ENCODE measurements at regions of chr1 and their contacts with region 1.

Region 1: DNA sequence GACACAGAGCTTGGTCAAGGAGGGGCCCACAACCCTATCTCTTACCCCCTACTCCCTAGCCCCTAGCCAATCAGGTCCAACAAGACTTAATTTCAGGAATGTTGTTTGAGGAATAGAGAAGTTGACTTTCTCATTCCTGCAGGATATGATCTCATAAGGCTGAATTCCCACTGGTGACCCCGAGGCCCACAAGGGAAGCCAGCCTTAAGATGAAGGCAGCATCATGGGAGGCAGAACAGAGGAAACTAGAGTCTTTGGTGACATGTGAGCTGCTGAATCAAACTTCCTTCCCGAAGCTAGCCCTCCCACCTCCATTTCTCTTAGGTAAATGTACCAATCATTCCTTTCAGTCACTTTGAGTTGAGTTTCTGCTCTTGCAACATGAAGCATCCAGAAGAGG is 9.1 kb upstream of the PDIK1L start:
- DNase-seq: no peak
- ATAC-seq: no peak
- H3K4me3 ChIP-seq: no peak overlapping the region
- H3K27ac ChIP-seq: no peak overlapping the region
- H3K4me1 ChIP-seq: peaks cover 12% of the 10 kb centered on the region
- H3K27me3 ChIP-seq: no peaks in the 10 kb centered on the region
- CTCF ChIP-seq: no peak

Region 2: GRCh38 chr1:26035959-26036755 is 66.4 kb before region 1 on chr1:
- CTCF ChIA-PET with region 1: interaction called, 4 read pairs
- POLR2A ChIA-PET with region 1: no interaction called
- intact Hi-C with region 1: loop called (anchors 2 kb)
- DNase-seq: peak; percentile 83
- ATAC-seq: peak; percentile 82
- H3K4me3 ChIP-seq: peak overlapping the region; percentile 80
- H3K27ac ChIP-seq: 0 out of 2 replicates have a peak overlapping the region, but pooled peaks have one; percentile 7
- H3K4me1 ChIP-seq: peaks cover 14% of the 10 kb centered on the region
- H3K27me3 ChIP-seq: no peaks in the 10 kb centered on the region
- CTCF ChIP-seq: peak; percentile 96

Region 3: GRCh38 chr1:26417111-26417759 is 314.7 kb after region 1 on chr1:
- CTCF ChIA-PET with region 1: interaction called, 3 read pairs
- POLR2A ChIA-PET with region 1: no interaction called
- intact Hi-C with region 1: loop called (anchors 10 kb)
- DNase-seq: peak; percentile 85
- ATAC-seq: peak; percentile 99
- H3K4me3 ChIP-seq: no peak overlapping the region
- H3K27ac ChIP-seq: no peak overlapping the region
- H3K4me1 ChIP-seq: peaks cover 5% of the 10 kb centered on the region
- H3K27me3 ChIP-seq: peaks cover 33% of the 10 kb centered on the region
- CTCF ChIP-seq: peak; percentile 82